Activated CD8-positive, alpha-beta T cell treated with anti-CD3 and anti-CD28 coated beads for 36 hours (primary cell): ENCODE measurements at regions of chr9 and their contacts with region 1.

Region 1: DNA sequence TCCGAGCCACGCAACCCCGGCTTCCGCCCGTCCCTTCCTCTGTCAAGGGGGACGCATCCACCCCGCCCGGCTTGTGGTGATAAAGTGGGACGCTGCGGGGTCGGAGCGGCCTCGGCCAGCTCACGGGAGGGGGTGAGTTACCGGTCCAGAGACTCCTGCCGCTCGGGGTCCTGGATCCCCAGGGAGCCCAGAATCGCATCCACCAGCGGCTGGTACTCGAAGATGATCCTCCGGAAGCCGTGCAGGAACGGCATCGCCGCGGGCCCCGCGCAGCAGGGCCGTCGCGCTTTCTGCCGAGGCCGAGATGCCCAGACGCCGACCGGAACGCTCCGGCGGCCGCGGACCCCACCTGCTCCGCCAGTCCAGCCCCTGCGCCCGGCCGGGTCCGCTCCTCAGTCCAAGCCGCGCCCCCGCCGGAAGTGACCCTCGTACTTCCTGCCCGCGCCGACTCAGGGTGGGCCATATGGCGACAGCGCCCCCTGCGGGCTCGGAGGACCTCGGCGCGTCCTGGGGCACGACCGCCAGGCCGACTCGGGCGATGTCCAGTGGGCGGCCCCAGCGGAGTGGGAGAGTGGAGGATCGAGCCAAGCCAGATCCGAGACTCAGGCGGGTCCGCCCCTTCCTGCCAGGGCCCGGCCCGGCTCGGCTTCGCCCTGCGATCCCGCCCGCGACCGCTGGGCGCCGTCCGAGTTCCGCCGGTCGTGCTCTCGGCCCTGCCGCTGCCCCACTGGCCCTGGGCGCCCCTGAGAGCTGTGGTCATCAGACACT is at the start of gene ASB6:
- DNase-seq: peak; percentile 97
- ATAC-seq: peak; percentile 98
- H3K4me3 Mint-ChIP-seq: peak within 1 kb of the TSS; percentile 89
- H3K27ac Mint-ChIP-seq: peak within 1 kb of the TSS; percentile 82
- H3K4me1 Mint-ChIP-seq: peaks cover 16% of the 10 kb centered on the region
- H3K27me3 Mint-ChIP-seq: no peaks in the 10 kb centered on the region
- CTCF ChIP-seq: peak; percentile 100
- total RNA-seq, gene ASB6: 16.6 TPM

Region 2: GRCh38 chr9:129487642-129488409 is 154.1 kb before region 1 on chr9:
- CTCF ChIA-PET with region 1: no interaction called
- POLR2A ChIA-PET with region 1: no interaction called
- intact Hi-C with region 1: no loop called
- DNase-seq: peak; percentile 72
- ATAC-seq: peak; percentile 25
- H3K4me3 Mint-ChIP-seq: peak overlapping the region; percentile 89
- H3K27ac Mint-ChIP-seq: peak overlapping the region; percentile 99
- H3K4me1 Mint-ChIP-seq: peaks cover 53% of the 10 kb centered on the region
- H3K27me3 Mint-ChIP-seq: no peaks in the 10 kb centered on the region
- CTCF ChIP-seq: no peak

Region 3: GRCh38 chr9:129584136-129584535 is 57.8 kb before region 1 on chr9:
- CTCF ChIA-PET with region 1: no interaction called
- POLR2A ChIA-PET with region 1: no interaction called
- intact Hi-C with region 1: no loop called
- DNase-seq: peak; percentile 80
- ATAC-seq: peak; percentile 36
- H3K4me3 Mint-ChIP-seq: no peak overlapping the region
- H3K27ac Mint-ChIP-seq: peak overlapping the region; percentile 73
- H3K4me1 Mint-ChIP-seq: peaks cover 68% of the 10 kb centered on the region
- H3K27me3 Mint-ChIP-seq: no peaks in the 10 kb centered on the region
- CTCF ChIP-seq: no peak

Region 4: GRCh38 chr9:129731477-129732100 is 89.7 kb after region 1 on chr9:
- CTCF ChIA-PET with region 1: interaction called, 11 read pairs
- POLR2A ChIA-PET with region 1: no interaction called
- intact Hi-C with region 1: loop called (anchors 5 kb)
- DNase-seq: no peak
- ATAC-seq: no peak
- H3K4me3 Mint-ChIP-seq: no peak overlapping the region
- H3K27ac Mint-ChIP-seq: no peak overlapping the region
- H3K4me1 Mint-ChIP-seq: peaks cover 2% of the 10 kb centered on the region
- H3K27me3 Mint-ChIP-seq: peaks cover 2% of the 10 kb centered on the region
- CTCF ChIP-seq: no peak

Region 5: GRCh38 chr9:129783516-129784361 is 141.8 kb after region 1 on chr9:
- CTCF ChIA-PET with region 1: interaction called, 11 read pairs
- POLR2A ChIA-PET with region 1: no interaction called
- intact Hi-C with region 1: loop called (anchors 10 kb)
- DNase-seq: peak; percentile 79
- ATAC-seq: peak; percentile 99
- H3K4me3 Mint-ChIP-seq: no peak overlapping the region
- H3K27ac Mint-ChIP-seq: no peak overlapping the region
- H3K4me1 Mint-ChIP-seq: peaks cover 2% of the 10 kb centered on the region
- H3K27me3 Mint-ChIP-seq: no peaks in the 10 kb centered on the region
- CTCF ChIP-seq: peak; percentile 92